GM12878 (cell line): ENCODE measurements at regions of chr14 and their contacts with region 1.

Region 1: GRCh38 chr14:105537369-105538164 is 11.2 kb downstream of the TMEM121 start:
- DNase-seq: no peak
- ATAC-seq: peak; percentile 98
- H3K4me3 ChIP-seq: no peak overlapping the region
- H3K27ac ChIP-seq: no peak overlapping the region
- H3K4me1 ChIP-seq: no peaks in the 10 kb centered on the region
- H3K27me3 ChIP-seq: no peaks in the 10 kb centered on the region; a peak in 2 of 4 replicates
- CTCF ChIP-seq: peak; percentile 89 to 100 (median 90)
- EP300 ChIP-seq: no peak
- POLR2A ChIP-seq: no peak
- RAD21 ChIP-seq: peak; percentile 71

Region 2: DNA sequence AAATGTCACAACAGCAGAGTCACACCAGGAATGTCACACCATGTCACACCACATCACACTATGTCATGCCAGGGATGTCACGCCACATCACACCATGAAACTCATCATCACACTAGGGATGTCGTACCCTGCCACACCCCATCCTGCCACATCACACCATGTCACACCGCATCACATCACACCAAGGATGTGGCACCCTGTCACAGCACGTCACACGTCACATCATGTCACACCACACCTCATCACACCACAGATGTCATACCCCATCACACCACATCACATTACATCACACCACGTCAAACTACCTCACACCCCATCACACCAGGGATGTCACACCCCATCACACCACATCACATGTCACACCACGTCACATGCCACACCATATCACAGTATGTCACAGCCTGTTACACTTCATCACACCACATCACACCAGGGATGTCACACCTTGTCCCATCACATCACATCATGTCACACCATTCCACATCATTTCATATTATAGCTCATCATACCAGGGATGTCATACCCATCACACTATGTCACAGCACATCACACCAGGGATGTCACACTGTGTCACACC is 79.7 kb after region 1 on chr14:
- CTCF ChIA-PET with region 1: no interaction called
- POLR2A ChIA-PET with region 1: no interaction called
- RAD21 ChIA-PET with region 1: no interaction called
- SMC1A ChIA-PET with region 1: no interaction called
- in situ Hi-C with region 1: no loop called
- intact Hi-C with region 1: no loop called
- DNase-seq: peak; percentile 13
- ATAC-seq: no peak
- H3K4me3 ChIP-seq: no peak overlapping the region
- H3K27ac ChIP-seq: no peak overlapping the region
- H3K4me1 ChIP-seq: no peaks in the 10 kb centered on the region; the same call in 1 of the 2 replicates
- H3K27me3 ChIP-seq: no peaks in the 10 kb centered on the region
- CTCF ChIP-seq: no peak
- EP300 ChIP-seq: no peak
- POLR2A ChIP-seq: no peak
- RAD21 ChIP-seq: no peak

Region 3: DNA sequence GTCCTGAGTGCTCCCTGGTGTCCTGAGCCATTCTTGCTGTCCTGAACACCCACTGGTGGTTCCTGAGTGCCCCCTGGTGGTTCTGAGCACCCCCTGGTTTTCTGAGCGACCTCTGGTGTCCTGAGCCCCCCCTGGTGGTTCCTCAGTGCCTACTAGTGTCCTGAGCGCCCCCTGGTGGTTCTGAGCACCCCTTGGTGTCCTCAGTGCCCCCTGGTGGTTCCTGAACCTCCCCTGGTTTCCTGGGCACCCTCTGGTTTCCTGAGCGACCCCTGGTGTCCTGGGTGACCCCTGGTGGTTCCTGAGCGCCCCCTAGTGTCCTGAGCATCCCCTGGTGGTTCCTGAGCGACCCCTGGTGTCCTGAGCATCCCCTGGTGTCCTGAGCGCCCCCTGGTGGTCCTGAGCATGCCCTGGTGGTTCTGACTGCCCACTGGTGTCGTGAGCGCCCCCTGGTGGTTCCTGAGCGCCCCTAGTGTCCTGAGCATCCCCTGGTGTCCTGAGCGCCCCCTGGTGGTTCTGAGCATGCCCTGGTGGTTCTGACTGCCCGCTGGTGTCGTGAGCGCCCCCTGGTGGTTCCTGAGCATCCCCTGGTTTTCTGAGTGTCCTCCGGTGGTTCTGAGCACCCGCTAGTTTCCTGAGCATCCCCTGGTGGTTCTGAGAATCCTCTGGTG is 461.9 kb after region 1 on chr14:
- CTCF ChIA-PET with region 1: no interaction called
- POLR2A ChIA-PET with region 1: no interaction called
- RAD21 ChIA-PET with region 1: no interaction called
- SMC1A ChIA-PET with region 1: no interaction called
- in situ Hi-C with region 1: loop called (anchors 10 kb)
- intact Hi-C with region 1: no loop called
- DNase-seq: no peak
- ATAC-seq: no peak
- H3K4me3 ChIP-seq: no peak overlapping the region
- H3K27ac ChIP-seq: no peak overlapping the region
- H3K4me1 ChIP-seq: no peaks in the 10 kb centered on the region
- H3K27me3 ChIP-seq: no peaks in the 10 kb centered on the region
- CTCF ChIP-seq: peak in 1 of 3 experiments; percentile 96; a peak in 3 of 6 replicates
- EP300 ChIP-seq: no peak
- POLR2A ChIP-seq: no peak
- RAD21 ChIP-seq: peak; percentile 62

Region 4: DNA sequence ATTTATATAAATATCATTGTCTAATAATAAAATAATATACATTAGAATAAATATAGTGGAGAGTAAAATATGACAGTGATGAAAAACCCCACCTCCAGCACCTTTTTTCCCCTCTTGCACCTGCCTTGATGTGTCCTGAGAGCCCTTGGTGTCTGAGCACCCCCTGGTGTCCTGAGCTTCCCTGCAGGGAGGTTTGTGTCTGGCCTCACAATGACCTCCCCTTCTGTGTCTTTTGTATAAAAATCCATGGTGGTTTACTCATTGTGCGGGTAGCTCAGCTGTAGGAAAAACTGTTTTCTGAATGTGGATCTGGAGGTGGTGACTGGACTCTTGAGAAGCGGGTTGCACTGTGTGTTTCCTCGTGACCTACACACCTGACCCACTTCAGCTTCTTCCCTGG is 625.7 kb after region 1 on chr14:
- CTCF ChIA-PET with region 1: no interaction called
- POLR2A ChIA-PET with region 1: no interaction called
- RAD21 ChIA-PET with region 1: no interaction called
- SMC1A ChIA-PET with region 1: no interaction called
- in situ Hi-C with region 1: loop called (anchors 10 kb)
- intact Hi-C with region 1: no loop called
- DNase-seq: no peak
- ATAC-seq: no peak
- H3K4me3 ChIP-seq: no peak overlapping the region
- H3K27ac ChIP-seq: no peak overlapping the region
- H3K4me1 ChIP-seq: no peaks in the 10 kb centered on the region
- H3K27me3 ChIP-seq: no peaks in the 10 kb centered on the region; a peak in 1 of 4 replicates
- CTCF ChIP-seq: no peak; a peak in 1 of 6 replicates
- EP300 ChIP-seq: no peak
- POLR2A ChIP-seq: no peak
- RAD21 ChIP-seq: no peak

Region 5: GRCh38 chr14:106174206-106174605 is 636.6 kb after region 1 on chr14:
- CTCF ChIA-PET with region 1: no interaction called
- POLR2A ChIA-PET with region 1: no interaction called
- RAD21 ChIA-PET with region 1: no interaction called
- SMC1A ChIA-PET with region 1: no interaction called
- in situ Hi-C with region 1: loop called (anchors 10 kb)
- intact Hi-C with region 1: loop called (anchors 10 kb)
- DNase-seq: no peak
- ATAC-seq: no peak
- H3K4me3 ChIP-seq: no peak overlapping the region
- H3K27ac ChIP-seq: no peak overlapping the region
- H3K4me1 ChIP-seq: no peaks in the 10 kb centered on the region
- H3K27me3 ChIP-seq: no peaks in the 10 kb centered on the region
- CTCF ChIP-seq: no peak
- EP300 ChIP-seq: no peak
- POLR2A ChIP-seq: no peak
- RAD21 ChIP-seq: no peak